Left ventricle myocardium superior (tissue), 1 donor: ENCODE measurements at regions of chr13 and their contacts with region 1.

Region 1: GRCh38 chr13:77779552-77780272 is 82.2 kb downstream of the SLAIN1 start:
- DNase-seq: no peak
- ATAC-seq: peak; percentile 70

Region 2: DNA sequence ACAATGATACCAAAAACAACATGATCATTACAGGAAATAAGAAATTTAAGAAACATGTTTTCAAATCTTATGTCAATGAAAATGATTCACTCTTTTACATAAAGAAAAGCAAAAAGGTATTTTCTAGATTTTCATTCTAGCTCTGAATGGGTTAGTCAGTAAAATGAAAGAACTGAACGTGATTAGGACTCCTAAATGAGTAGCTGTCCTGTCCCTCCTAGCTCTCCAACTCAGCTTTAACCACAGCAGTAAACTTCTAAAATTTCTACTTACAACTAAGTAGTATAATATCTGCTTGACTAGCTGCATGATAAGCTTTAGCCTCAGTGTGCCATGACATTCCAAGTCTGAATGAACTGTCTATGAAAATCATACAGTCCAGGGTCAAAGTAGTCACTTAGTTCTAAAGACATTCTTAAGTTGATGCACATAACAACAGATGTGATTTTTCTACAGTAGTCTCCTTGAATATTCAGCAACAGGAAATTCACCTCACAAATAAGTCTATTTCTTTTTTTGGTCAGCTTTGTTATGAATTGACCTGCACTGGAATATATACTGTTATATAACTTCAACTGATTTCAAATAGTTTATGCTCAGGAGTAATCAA is 589.3 kb before region 1 on chr13:
- intact Hi-C with region 1: no loop called
- DNase-seq: no peak
- ATAC-seq: no peak

Region 3: DNA sequence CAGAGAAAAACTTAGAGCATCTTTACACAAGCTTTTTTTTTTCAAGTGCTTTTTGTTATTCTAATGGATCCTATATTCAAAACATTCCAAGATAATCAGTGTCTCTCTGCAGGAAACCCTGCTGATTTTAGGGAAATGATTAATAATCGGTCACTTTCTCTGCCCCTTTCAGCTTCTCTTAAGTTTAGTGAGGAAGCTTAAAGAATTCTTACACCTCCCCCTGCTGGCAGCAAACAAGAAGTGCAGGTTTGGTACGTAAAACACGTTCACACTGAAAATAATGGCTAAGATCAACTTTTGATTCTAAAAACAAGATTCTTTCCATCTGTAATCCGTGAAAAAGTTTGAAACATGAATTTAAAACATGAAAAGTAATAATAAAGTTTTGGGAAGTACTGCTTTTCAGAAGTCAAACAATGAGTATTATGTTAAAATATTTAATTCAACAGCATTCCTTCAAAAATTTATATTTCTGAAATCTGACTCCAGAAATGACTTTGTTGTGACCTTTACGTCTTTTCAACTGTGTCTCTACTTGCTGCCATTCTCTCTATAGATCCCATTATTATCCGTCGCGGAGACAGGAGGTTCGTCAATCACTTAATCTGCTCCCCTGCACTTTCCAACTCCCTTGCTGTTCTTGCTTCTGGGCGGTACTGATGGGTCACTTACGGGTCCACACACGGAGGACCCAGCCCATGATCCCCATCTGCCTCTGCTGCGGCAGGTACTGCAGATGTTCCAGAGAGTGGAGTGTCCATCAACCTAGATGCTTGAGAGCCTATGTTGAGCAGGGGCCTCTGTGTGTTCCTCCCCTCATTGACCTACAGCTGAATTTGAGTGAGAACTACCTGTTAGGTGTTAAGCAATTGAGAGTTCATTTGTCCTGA is 342.0 kb after region 1 on chr13:
- intact Hi-C with region 1: loop called (anchors 5 kb)
- DNase-seq: peak; percentile 34
- ATAC-seq: peak; percentile 43